CD4-positive, alpha-beta memory T cell (primary cell): ENCODE measurements at regions of chr12 and their contacts with region 1.

Region 1: GRCh38 chr12:96219698-96220206 is 25.6 kb downstream of the ELK3 start:
- DNase-seq: no peak
- H3K4me3 ChIP-seq: no peak overlapping the region
- H3K4me3 Mint-ChIP-seq: peak overlapping the region in 2 of 8 donors; percentile 16 to 51
- H3K27ac ChIP-seq: no peak overlapping the region
- H3K27ac Mint-ChIP-seq: peak overlapping the region; percentile 50 to 78 (median 68)
- H3K4me1 ChIP-seq: peaks cover 37% of the 10 kb centered on the region
- H3K4me1 Mint-ChIP-seq: peaks cover 37 to 73% (median 51%) of the 10 kb centered on the region in 4 donors
- H3K27me3 ChIP-seq: no peaks in the 10 kb centered on the region
- H3K27me3 Mint-ChIP-seq: no peaks in the 10 kb centered on the region

Region 2: DNA sequence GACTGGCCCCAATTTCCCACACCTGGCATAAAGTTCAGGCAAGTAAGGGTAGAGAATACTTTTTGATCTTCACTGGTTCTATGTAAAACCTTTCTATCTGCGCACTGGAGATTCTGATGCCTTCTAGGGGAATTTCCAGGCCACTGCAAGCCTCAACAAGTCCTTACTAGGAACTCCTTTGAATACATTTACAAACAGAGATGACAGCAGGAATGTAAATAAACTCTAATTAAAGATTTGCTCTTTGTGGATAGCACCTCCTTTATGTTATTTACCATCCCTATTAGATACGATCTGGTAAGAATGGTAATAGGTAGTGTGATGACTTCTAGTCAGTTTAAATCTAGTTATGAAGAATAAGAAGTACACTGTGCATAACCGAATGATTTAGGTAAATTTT is 498.4 kb before region 1 on chr12:
- CTCF ChIA-PET with region 1: no interaction called
- POLR2A ChIA-PET with region 1: no interaction called
- intact Hi-C with region 1: no loop called
- DNase-seq: no peak
- H3K4me3 ChIP-seq: no peak overlapping the region
- H3K4me3 Mint-ChIP-seq: no peak overlapping the region
- H3K27ac ChIP-seq: no peak overlapping the region
- H3K27ac Mint-ChIP-seq: no peak overlapping the region
- H3K4me1 ChIP-seq: no peaks in the 10 kb centered on the region
- H3K4me1 Mint-ChIP-seq: no peaks in the 10 kb centered on the region
- H3K27me3 ChIP-seq: no peaks in the 10 kb centered on the region
- H3K27me3 Mint-ChIP-seq: peaks cover 0 to 4% of the 10 kb centered on the region in 2 donors

Region 3: GRCh38 chr12:96073346-96074330 is 146.1 kb before region 1 on chr12:
- CTCF ChIA-PET with region 1: interaction called, 12 read pairs
- POLR2A ChIA-PET with region 1: interaction called, 3 read pairs
- intact Hi-C with region 1: no loop called
- DNase-seq: no peak
- H3K4me3 ChIP-seq: no peak overlapping the region
- H3K4me3 Mint-ChIP-seq: no peak overlapping the region
- H3K27ac ChIP-seq: no peak overlapping the region
- H3K27ac Mint-ChIP-seq: peak overlapping the region in 3 of 7 donors; percentile 3 to 30 (median 20)
- H3K4me1 ChIP-seq: no peaks in the 10 kb centered on the region
- H3K4me1 Mint-ChIP-seq: peaks cover 2 to 13% (median 9%) of the 10 kb centered on the region in 4 donors
- H3K27me3 ChIP-seq: no peaks in the 10 kb centered on the region
- H3K27me3 Mint-ChIP-seq: peaks cover 1% of the 10 kb centered on the region in 2 donors

Region 4: DNA sequence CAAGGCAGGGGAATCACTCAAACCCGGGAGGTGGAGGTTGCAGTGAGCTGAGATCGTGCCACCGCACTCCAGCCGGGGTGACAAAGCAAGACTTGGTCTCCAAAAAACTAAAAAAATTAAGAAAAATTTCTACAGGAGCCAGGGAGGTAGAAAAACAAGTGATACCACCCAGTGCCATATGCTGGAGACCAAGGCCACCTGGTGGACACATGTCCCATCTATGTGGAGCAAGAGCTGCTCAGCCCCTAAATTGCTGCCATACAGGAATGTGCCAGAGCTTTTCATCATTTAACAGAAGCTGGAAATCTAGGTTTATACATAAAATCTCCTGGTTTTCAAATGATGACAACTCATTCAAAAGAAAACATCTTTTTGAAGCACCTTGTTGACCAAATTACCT is 86.9 kb before region 1 on chr12:
- CTCF ChIA-PET with region 1: interaction called, 26 read pairs
- POLR2A ChIA-PET with region 1: interaction called, 3 read pairs
- intact Hi-C with region 1: loop called (anchors 2 kb)
- DNase-seq: peak in 2 of 5 donors; percentile 5 to 19
- H3K4me3 ChIP-seq: no peak overlapping the region
- H3K4me3 Mint-ChIP-seq: no peak overlapping the region
- H3K27ac ChIP-seq: no peak overlapping the region
- H3K27ac Mint-ChIP-seq: no peak overlapping the region
- H3K4me1 ChIP-seq: peaks cover 17% of the 10 kb centered on the region
- H3K4me1 Mint-ChIP-seq: peaks cover 12 to 20% (median 15%) of the 10 kb centered on the region in 4 donors
- H3K27me3 ChIP-seq: no peaks in the 10 kb centered on the region
- H3K27me3 Mint-ChIP-seq: peaks cover 6 to 11% of the 10 kb centered on the region in 2 donors

Region 5: DNA sequence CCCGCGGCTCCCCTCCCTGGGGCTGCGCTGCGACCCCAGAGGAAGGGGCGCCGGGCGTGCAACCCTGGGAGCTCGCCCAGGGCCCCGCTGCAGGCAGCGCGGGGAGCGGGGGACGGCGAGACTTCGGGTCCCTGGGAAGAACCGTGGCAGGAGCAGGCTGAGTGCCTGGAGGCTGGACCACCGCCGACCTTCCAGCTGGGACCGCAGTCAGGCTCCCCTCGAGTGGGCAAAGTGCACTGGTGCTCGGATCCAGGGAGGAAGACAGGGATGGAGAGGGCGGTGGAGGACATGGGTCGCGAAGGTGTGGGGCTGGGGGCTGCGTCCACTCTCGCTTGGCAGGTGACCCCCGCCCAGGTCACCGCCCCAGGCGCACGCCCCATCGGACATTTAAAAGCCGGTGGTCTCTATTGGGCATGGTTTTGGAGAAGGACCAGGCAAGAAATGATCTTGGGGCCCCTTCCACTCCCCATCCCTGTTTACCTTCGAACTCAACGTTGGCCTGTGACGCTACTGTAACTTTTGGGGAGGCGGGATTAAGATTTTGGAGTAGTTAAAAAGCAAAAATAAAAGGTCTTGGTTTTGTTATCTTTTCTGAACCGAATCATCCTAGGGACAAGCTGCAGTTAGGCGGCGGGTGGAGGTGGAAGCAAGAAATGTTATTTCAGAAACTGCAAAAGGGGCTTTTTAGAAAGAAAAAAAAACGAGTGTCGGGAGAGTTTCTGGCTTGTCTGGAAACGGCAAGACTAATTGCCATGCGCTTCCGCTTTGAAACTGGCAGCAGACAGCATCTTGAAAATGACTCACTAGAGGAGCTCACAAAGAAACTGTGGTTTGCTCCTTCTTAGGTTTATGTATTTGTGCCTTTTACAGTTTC is 24.5 kb before region 1 on chr12:
- CTCF ChIA-PET with region 1: interaction called, 149 read pairs
- POLR2A ChIA-PET with region 1: interaction called, 14 read pairs
- intact Hi-C with region 1: loop called (anchors 1 kb)
- DNase-seq: peak; percentile 72 to 94 (median 76)
- H3K4me3 ChIP-seq: peak overlapping the region; percentile 85 to 90
- H3K4me3 Mint-ChIP-seq: peak overlapping the region; percentile 93 to 100 (median 98)
- H3K27ac ChIP-seq: peak overlapping the region; percentile 95
- H3K27ac Mint-ChIP-seq: peak overlapping the region; percentile 96 to 100 (median 97)
- H3K4me1 ChIP-seq: peaks cover 52% of the 10 kb centered on the region
- H3K4me1 Mint-ChIP-seq: peaks cover 34 to 62% (median 42%) of the 10 kb centered on the region in 4 donors
- H3K27me3 ChIP-seq: no peaks in the 10 kb centered on the region
- H3K27me3 Mint-ChIP-seq: no peaks in the 10 kb centered on the region

Region 6: DNA sequence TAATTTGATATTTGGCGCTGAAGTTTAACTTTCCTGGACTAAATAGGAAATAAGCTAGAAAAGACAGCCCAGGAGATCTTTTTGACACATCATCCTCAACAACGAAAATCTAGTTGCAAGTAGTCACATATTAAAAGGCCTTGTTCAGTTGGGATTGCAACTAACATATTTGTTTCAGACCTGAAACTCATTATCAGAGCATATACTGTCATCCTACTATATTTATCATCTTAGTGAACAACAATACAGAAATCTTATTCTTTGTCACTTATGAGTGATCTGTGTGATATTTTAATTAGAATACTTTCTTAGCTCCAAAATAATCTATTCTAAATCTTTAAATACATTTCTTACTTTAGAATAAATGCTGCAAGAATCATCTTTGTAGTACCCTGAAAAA is 46.5 kb after region 1 on chr12:
- CTCF ChIA-PET with region 1: interaction called, 3 read pairs
- POLR2A ChIA-PET with region 1: no interaction called
- intact Hi-C with region 1: loop called (anchors 1 kb)
- DNase-seq: no peak
- H3K4me3 ChIP-seq: no peak overlapping the region
- H3K4me3 Mint-ChIP-seq: no peak overlapping the region
- H3K27ac ChIP-seq: no peak overlapping the region
- H3K27ac Mint-ChIP-seq: peak overlapping the region in 3 of 7 donors; percentile 50 to 82 (median 64)
- H3K4me1 ChIP-seq: no peaks in the 10 kb centered on the region
- H3K4me1 Mint-ChIP-seq: peaks cover 22 to 50% (median 25%) of the 10 kb centered on the region in 4 donors
- H3K27me3 ChIP-seq: no peaks in the 10 kb centered on the region
- H3K27me3 Mint-ChIP-seq: no peaks in the 10 kb centered on the region